PC-3 (cell line): ENCODE measurements at regions of chr5 and their contacts with region 1.

Region 1: DNA sequence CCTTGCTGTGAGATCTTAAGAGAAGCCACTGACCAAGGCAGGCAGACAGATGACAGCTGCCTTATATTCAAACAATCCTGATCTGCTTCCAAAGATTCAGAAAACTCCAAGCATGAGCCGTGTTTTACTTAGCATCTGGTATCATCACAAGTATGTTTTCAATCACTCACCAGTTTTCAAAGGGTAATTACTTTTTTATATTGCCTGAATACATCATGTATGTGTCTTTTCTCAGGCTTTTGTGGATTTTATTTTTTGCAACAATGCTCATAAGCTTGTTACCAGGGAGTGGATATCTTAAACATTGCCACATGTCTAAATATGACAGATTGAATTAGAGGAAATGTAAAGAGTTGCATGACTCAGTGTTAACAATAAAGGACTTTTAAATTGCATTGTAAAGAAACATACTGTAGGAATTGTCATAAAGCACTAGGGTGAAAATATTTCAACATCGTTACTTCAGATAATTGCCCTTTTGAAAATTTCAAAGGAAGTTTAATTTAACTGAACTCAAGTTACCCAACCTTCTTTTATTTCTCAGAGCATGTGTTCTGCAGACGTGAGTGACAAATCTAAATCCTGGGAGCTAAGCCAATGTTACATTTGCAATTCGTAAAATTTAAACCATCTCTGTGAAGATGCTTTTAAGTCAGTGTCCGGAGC is 326.1 kb downstream of the PLK2 start:
- DNase-seq: peak; percentile 66
- ATAC-seq: peak; percentile 70
- H3K4me3 ChIP-seq: 0 out of 2 replicates have a peak overlapping the region, but pooled peaks have one; percentile 4
- H3K27ac ChIP-seq: peak overlapping the region; percentile 94
- H3K4me1 ChIP-seq: peaks cover 41% of the 10 kb centered on the region
- H3K27me3 ChIP-seq: no peaks in the 10 kb centered on the region
- CTCF ChIP-seq: no peak

Region 2: DNA sequence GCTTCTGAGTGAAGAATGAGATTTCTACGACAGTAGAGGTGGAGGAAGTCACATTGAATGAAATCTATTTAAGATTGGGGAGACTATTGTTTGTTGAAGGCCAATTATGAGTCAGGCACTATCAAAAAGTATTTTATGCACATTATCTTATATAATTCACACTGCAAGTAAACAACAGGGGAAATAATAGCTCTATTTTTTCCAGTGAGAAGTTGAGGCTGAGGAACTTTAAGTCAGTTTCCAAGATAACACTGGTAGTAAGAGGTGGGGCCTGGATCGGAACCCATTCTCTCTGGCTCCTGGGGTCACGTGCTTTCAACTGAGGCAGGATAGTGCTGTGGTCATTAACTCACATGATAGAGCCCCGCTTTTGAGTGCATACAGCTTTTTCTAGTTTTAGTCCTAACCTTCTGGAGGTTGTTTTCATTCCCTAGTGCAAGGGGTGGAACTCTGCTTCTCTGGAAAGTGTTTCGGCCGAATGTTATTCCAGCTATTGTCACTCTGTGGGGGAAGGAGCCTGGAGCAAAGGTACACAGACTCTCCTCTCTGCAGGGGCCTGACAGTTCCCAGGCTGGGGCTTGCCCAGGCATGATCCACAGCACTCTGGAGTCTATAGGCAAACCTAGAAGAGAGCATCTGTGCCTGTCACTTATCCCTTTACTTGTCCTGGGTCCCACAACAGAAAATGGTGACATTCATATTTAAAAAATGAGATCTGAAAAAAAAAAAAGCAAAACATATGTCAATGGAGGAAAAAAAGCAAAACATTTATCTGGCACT is 298.7 kb before region 1 on chr5:
- CTCF ChIA-PET with region 1: no interaction called
- POLR2A ChIA-PET with region 1: no interaction called
- intact Hi-C with region 1: loop called (anchors 5 kb)
- DNase-seq: no peak
- ATAC-seq: no peak
- H3K4me3 ChIP-seq: no peak overlapping the region
- H3K27ac ChIP-seq: no peak overlapping the region
- H3K4me1 ChIP-seq: peaks cover 27% of the 10 kb centered on the region
- H3K27me3 ChIP-seq: no peaks in the 10 kb centered on the region
- CTCF ChIP-seq: no peak

Region 3: DNA sequence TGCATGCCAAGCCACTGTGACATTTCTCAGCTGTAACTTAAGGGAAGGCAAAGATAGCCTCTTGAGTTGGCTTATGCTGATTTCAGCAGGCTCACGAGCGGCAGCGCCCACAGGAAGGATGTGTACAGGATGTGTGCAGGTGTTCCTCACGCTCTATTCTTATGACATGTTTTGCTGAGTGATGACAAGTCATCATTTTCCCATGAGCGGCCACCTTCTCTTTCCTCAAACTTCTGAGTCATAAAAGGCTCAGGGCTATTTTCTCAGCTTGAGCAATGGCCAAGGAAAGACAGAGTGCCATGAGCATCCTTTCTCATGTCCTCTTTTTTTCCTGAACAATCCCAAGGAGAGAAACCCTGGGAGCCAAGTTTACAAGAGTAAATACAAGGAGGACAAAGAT is 39.7 kb before region 1 on chr5:
- CTCF ChIA-PET with region 1: no interaction called
- POLR2A ChIA-PET with region 1: no interaction called
- intact Hi-C with region 1: loop called (anchors 5 kb)
- DNase-seq: peak; percentile 95
- ATAC-seq: peak; percentile 95
- H3K4me3 ChIP-seq: no peak overlapping the region
- H3K27ac ChIP-seq: peak overlapping the region; percentile 89
- H3K4me1 ChIP-seq: peaks cover 17% of the 10 kb centered on the region
- H3K27me3 ChIP-seq: no peaks in the 10 kb centered on the region
- CTCF ChIP-seq: no peak

Region 4: GRCh38 chr5:58183078-58183816 is 49.5 kb after region 1 on chr5:
- CTCF ChIA-PET with region 1: no interaction called
- POLR2A ChIA-PET with region 1: no interaction called
- intact Hi-C with region 1: loop called (anchors 1 kb)
- DNase-seq: peak; percentile 62
- ATAC-seq: peak; percentile 69
- H3K4me3 ChIP-seq: no peak overlapping the region
- H3K27ac ChIP-seq: peak overlapping the region; percentile 92
- H3K4me1 ChIP-seq: peaks cover 67% of the 10 kb centered on the region
- H3K27me3 ChIP-seq: no peaks in the 10 kb centered on the region
- CTCF ChIP-seq: no peak

Region 5: GRCh38 chr5:58491216-58491892 is 357.6 kb after region 1 on chr5 and contains the start of gene GAPT:
- CTCF ChIA-PET with region 1: no interaction called
- POLR2A ChIA-PET with region 1: no interaction called
- intact Hi-C with region 1: no loop called
- DNase-seq: no peak
- ATAC-seq: no peak
- H3K4me3 ChIP-seq: no peak within 1 kb of the TSS
- H3K27ac ChIP-seq: no peak within 1 kb of the TSS
- H3K4me1 ChIP-seq: no peaks in the 10 kb centered on the region
- H3K27me3 ChIP-seq: peaks cover 55% of the 10 kb centered on the region
- CTCF ChIP-seq: no peak
- total RNA-seq, gene GAPT: not detected in 2 replicates